Heart right ventricle (tissue), 16 donors: ENCODE measurements at regions of chr17 and their contacts with region 1.

Region 1: GRCh38 chr17:34902831-34903547 is 58.3 kb downstream of the CCT6B start:
- DNase-seq: no peak
- ATAC-seq: no peak
- H3K4me3 ChIP-seq: no peak overlapping the region
- H3K27ac ChIP-seq: no peak overlapping the region
- H3K4me1 ChIP-seq: no peaks in the 10 kb centered on the region
- H3K27me3 ChIP-seq: peaks cover 0 to 29% (median 4%) of the 10 kb centered on the region in 7 donors
- CTCF ChIP-seq: no peak

Region 2: DNA sequence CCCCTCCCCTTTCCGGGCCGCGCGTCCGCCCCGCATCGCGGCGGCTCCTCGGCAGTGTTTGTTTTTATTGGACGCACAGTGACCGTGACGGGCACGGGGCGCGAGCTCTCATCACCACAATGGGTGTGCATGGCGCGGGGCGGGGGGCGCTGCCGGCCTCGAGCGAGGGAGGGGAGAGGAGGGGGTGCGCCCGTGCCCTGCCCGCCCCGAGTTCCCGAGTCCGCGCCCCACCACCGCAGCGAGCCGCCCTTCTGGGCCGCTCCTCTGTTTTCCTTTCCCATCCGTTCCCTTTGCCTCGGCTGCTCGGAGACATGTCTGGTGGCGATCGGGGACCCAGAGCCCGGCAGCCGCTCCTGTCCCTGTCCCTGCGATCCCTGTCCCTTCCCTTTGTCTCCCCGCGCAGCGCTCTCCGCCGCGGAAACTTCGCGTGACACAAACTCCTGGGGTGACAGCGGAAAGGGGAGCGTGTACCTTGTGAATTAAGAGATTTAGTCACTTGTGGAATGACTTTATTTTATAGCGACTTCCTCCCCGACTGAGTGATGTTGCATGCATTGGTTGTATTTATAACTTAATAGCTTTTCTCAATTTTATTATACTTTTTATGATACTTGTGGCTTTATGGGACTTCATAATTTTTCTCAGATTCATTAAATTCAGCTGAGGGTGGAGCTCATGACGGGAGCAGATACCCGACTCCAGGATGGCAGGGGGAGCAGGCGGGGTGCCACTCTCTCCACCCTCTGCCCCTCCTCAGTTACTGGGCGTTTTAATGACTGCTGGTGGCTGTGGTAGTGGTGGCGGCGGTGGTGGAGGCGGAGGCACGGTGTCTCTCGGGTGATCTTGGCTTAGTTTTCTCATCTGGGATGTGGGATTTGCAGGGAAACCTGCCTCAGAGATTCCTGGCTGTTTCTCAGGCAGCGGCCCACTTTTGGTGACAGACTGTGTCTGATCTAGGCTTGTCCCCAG is 1739.2 kb after region 1 on chr17:
- intact Hi-C with region 1: loop called in 1 of 10 experiments (anchors 5 kb)
- DNase-seq: no peak
- ATAC-seq: no peak
- H3K4me3 ChIP-seq: peak overlapping the region in 9 of 10 donors; percentile 23 to 51 (median 44)
- H3K27ac ChIP-seq: no peak overlapping the region
- H3K4me1 ChIP-seq: peaks cover 5 to 20% (median 13%) of the 10 kb centered on the region in 9 donors
- H3K27me3 ChIP-seq: peaks cover 0 to 99% (median 98%) of the 10 kb centered on the region in 7 donors
- CTCF ChIP-seq: no peak